Common myeloid progenitor, CD34-positive (primary cell): ENCODE measurements at regions of chr12 and their contacts with region 1.

Region 1: DNA sequence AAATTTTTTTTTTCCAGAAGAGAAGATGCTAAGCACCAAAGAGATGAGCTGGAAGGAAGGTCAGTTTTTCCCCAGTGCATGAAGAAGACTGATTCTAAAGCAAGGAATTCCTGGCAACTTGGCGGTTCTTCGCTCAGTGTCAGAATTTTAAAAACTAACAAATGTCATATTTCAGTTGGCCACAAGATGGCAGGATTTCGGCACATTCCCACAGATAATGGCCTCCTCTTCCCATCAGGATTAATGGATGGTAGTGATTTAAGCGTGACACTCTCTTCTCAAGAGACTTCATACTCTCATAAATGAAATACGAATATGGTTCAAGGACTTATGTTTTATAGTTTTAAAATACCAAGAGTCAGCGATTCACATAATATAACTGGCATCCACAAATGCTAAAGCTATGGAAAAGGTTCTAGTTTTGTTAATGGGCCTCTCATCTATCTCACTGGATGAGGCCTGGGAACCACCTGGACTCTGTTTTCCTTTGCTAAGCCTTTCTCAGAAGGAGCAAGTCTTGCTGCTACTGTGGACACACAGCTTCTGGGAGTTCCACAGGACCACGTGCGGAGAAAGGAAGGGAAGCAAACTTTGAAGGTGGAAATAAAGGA is 46.1 kb upstream of the PTPRO start:
- DNase-seq: peak in 2 of 3 donors; percentile 16 to 22
- H3K4me3 ChIP-seq: no peak overlapping the region
- H3K27ac ChIP-seq: no peak overlapping the region
- H3K4me1 ChIP-seq: peaks cover 0 to 16% (median 10%) of the 10 kb centered on the region in 4 experiments
- H3K27me3 ChIP-seq: peaks cover 0 to 46% (median 14%) of the 10 kb centered on the region in 5 experiments

Region 2: DNA sequence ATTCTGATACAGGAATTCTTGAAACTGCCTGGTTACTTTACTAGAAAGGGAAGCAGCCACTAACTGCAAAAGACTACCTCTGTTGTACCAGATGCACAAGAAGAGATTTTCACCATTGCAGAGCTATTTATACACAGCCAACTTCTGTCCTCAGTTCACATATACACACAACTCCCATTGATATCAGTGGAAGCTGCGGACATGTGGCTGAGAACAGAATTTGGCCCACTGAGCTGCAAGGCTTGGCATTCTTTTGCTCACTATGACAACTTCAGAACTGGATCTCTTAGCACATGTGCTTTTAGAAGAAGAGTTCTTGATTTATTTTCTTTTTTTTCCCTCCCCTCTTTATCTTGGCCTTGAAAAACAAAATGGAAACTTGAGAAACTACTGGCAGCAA is 74.5 kb after region 1 on chr12:
- CTCF ChIA-PET with region 1: no interaction called
- POLR2A ChIA-PET with region 1: no interaction called
- DNase-seq: no peak
- H3K4me3 ChIP-seq: no peak overlapping the region
- H3K27ac ChIP-seq: no peak overlapping the region
- H3K4me1 ChIP-seq: no peaks in the 10 kb centered on the region
- H3K27me3 ChIP-seq: peaks cover 4 to 13% (median 7%) of the 10 kb centered on the region in 5 experiments

Region 3: GRCh38 chr12:15522565-15523187 is 246.5 kb after region 1 on chr12:
- CTCF ChIA-PET with region 1: interaction called, 22 read pairs
- POLR2A ChIA-PET with region 1: no interaction called
- DNase-seq: peak; percentile 56 to 74 (median 73)
- H3K4me3 ChIP-seq: no peak overlapping the region
- H3K27ac ChIP-seq: no peak overlapping the region
- H3K4me1 ChIP-seq: peaks cover 0 to 6% (median 1%) of the 10 kb centered on the region in 4 experiments
- H3K27me3 ChIP-seq: peaks cover 0 to 31% (median 8%) of the 10 kb centered on the region in 5 experiments